ENCODE measurements at regions of chr5 and their contacts with region 1.

Region 1: GRCh38 chr5:170633235-170634081 is 129.6 kb downstream of the KCNIP1 start:
- DNase-seq: peak in 4 of 5 donors; percentile 44 to 78 (median 62)
- ATAC-seq: peak; percentile 62 to 79 (median 69)
- H3K4me3 ChIP-seq: peak overlapping the region in 11 of 12 donors; percentile 11 to 55 (median 39)
- H3K27ac ChIP-seq: peak overlapping the region; percentile 30 to 93 (median 79)
- H3K4me1 ChIP-seq: peaks cover 0 to 39% (median 20%) of the 10 kb centered on the region in 12 donors
- H3K27me3 ChIP-seq: no peaks in the 10 kb centered on the region
- CTCF ChIP-seq: peak in 3 of 12 donors; percentile 5 to 33 (median 30)
- POLR2A ChIP-seq: no peak

Region 2: GRCh38 chr5:170603578-170604565 is 29.6 kb before region 1 on chr5:
- intact Hi-C with region 1: loop called in 1 of 10 experiments (anchors 2 kb)
- DNase-seq: peak in 4 of 5 donors; percentile 40 to 74 (median 47)
- ATAC-seq: peak in 2 of 4 donors; percentile 55
- H3K4me3 ChIP-seq: no peak overlapping the region
- H3K27ac ChIP-seq: no peak overlapping the region
- H3K4me1 ChIP-seq: no peaks in the 10 kb centered on the region
- H3K27me3 ChIP-seq: no peaks in the 10 kb centered on the region
- CTCF ChIP-seq: peak; percentile 44 to 70 (median 62)
- POLR2A ChIP-seq: no peak

Region 3: GRCh38 chr5:170843870-170844269 is 210.4 kb after region 1 on chr5:
- intact Hi-C with region 1: no loop called
- DNase-seq: no peak
- ATAC-seq: no peak
- H3K4me3 ChIP-seq: no peak overlapping the region
- H3K27ac ChIP-seq: no peak overlapping the region
- H3K4me1 ChIP-seq: no peaks in the 10 kb centered on the region
- H3K27me3 ChIP-seq: peaks cover 0 to 3% (median 0%) of the 10 kb centered on the region in 9 donors
- CTCF ChIP-seq: no peak
- POLR2A ChIP-seq: no peak

Region 4: DNA sequence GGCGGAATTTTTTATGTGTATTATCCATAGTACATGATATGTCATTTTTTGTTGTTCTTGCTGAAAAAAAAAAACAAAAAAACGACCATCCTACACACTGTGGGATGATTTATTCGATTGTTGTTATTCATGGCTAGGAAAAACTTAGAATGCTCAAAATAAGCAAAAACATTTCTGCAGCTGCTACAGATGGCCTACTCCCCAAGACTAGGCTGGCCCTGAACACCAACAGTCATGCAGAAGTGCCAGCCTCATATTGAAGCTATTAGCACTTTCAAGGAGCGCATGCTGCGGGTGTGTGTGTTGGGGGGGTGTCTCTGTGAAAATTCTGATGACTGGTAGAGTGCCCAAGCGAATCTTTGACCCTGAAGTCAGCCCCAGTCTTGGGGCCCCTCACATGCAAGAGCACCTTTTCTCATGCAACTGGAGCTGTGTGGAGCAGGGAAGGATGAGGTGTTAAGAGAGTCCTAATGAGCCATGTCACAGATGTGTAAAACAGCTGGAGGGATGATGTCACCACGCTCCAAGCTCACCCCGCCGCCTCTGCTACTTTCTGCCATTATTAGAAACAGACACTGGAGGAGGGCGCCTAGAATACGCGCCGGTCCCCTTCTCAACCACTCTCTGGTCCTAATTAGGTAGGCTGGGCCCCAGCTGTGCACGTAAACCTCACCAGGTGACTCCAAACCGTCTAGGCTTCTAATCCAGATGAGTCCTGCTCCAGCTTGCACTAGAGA is 1091.2 kb after region 1 on chr5:
- intact Hi-C with region 1: no loop called
- DNase-seq: peak in 3 of 5 donors; percentile 43 to 52 (median 44)
- ATAC-seq: peak; percentile 29 to 92 (median 72)
- H3K4me3 ChIP-seq: no peak overlapping the region
- H3K27ac ChIP-seq: peak overlapping the region in 1 of 12 donors; percentile 47
- H3K4me1 ChIP-seq: peaks cover 0 to 7% (median 0%) of the 10 kb centered on the region in 12 donors
- H3K27me3 ChIP-seq: no peaks in the 10 kb centered on the region
- CTCF ChIP-seq: no peak
- POLR2A ChIP-seq: no peak

Measured in heart left ventricle (tissue), 16 donors.